Activated CD4-positive, alpha-beta T cell treated with anti-CD3 and anti-CD28 coated beads, Interleukin-2, amount 10 ng/mL, durations not matched to agents 24 days and 14 days (primary cell): ENCODE measurements at regions of chr6 and their contacts with region 1.

Region 1: DNA sequence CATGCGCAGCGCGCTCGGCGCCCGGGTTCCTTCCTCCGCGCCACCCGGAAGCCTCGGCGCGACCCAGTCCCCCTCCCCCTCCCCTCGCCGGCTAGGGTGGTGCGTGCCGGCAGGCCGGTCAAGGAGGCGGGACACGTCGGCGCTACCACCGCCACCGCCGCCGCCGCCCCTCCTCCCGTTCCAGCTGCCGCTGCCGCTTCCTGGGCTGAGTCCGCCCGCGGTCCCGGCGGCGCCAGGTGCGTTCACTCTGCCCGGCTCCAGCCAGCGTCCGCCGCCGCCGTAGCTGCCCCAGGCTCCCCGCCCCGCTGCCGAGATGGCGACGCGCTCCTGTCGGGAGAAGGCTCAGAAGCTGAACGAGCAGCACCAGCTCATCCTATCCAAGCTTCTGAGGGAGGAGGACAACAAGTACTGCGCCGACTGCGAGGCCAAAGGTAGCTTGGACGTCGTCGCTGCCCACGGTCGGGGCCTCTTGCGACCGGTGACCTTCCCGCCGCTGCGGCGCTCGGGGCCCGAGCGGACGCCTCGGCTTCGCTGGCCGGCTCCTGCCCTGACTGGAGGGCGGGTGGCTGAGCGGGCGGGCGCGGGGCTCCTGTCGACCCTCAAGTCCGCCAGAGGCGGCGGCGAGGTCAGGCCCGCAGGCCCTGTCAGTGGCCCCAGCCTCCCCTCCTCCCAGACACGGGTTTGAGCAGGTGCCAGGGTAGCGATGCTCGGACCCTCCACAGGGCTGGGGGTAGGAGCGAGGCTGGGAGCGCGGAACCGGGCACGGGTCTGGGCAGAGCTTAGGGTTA is at the start of gene SMAP1:
- DNase-seq: peak; percentile 98
- H3K4me3 Mint-ChIP-seq: peak within 1 kb of the TSS; percentile 90
- H3K27ac Mint-ChIP-seq: peak within 1 kb of the TSS; percentile 94
- H3K4me1 Mint-ChIP-seq: peaks cover 52% of the 10 kb centered on the region
- H3K27me3 Mint-ChIP-seq: no peaks in the 10 kb centered on the region
- total RNA-seq, gene SMAP1: 21.5 and 23.2 TPM in 2 replicates

Region 2: GRCh38 chr6:70413114-70413991 is 254.6 kb before region 1 on chr6 and contains the start of gene FAM135A:
- intact Hi-C with region 1: loop called (anchors 1 kb)
- DNase-seq: peak; percentile 98
- H3K4me3 Mint-ChIP-seq: peak within 1 kb of the TSS; percentile 92
- H3K27ac Mint-ChIP-seq: peak within 1 kb of the TSS; percentile 87
- H3K4me1 Mint-ChIP-seq: peaks cover 27% of the 10 kb centered on the region
- H3K27me3 Mint-ChIP-seq: peaks cover 7% of the 10 kb centered on the region
- total RNA-seq, gene FAM135A: 7.7 and 10.5 TPM in 2 replicates

Region 3: GRCh38 chr6:70557998-70558397 is 109.9 kb before region 1 on chr6:
- intact Hi-C with region 1: loop called (anchors 2 kb)
- DNase-seq: peak; percentile 14
- H3K4me3 Mint-ChIP-seq: no peak overlapping the region
- H3K27ac Mint-ChIP-seq: peak overlapping the region; percentile 64
- H3K4me1 Mint-ChIP-seq: peaks cover 16% of the 10 kb centered on the region
- H3K27me3 Mint-ChIP-seq: no peaks in the 10 kb centered on the region

Region 4: GRCh38 chr6:70566751-70567382 is 101.0 kb before region 1 on chr6 and contains the start of gene SDHAF4:
- intact Hi-C with region 1: loop called (anchors 1 kb)
- DNase-seq: no peak
- H3K4me3 Mint-ChIP-seq: peak within 1 kb of the TSS; percentile 88
- H3K27ac Mint-ChIP-seq: peak within 1 kb of the TSS; percentile 90
- H3K4me1 Mint-ChIP-seq: peaks cover 11% of the 10 kb centered on the region
- H3K27me3 Mint-ChIP-seq: no peaks in the 10 kb centered on the region
- total RNA-seq, gene SDHAF4: 9.5 and 14.3 TPM in 2 replicates

Region 5: GRCh38 chr6:70651326-70651905 is 16.5 kb before region 1 on chr6:
- intact Hi-C with region 1: loop called (anchors 1 kb)
- DNase-seq: peak; percentile 94
- H3K4me3 Mint-ChIP-seq: peak overlapping the region; percentile 71
- H3K27ac Mint-ChIP-seq: peak overlapping the region; percentile 84
- H3K4me1 Mint-ChIP-seq: peaks cover 45% of the 10 kb centered on the region
- H3K27me3 Mint-ChIP-seq: no peaks in the 10 kb centered on the region

Region 6: GRCh38 chr6:71139249-71139648 is 471.3 kb after region 1 on chr6:
- intact Hi-C with region 1: no loop called
- DNase-seq: no peak
- H3K4me3 Mint-ChIP-seq: no peak overlapping the region
- H3K27ac Mint-ChIP-seq: no peak overlapping the region
- H3K4me1 Mint-ChIP-seq: no peaks in the 10 kb centered on the region
- H3K27me3 Mint-ChIP-seq: no peaks in the 10 kb centered on the region

Region 7: DNA sequence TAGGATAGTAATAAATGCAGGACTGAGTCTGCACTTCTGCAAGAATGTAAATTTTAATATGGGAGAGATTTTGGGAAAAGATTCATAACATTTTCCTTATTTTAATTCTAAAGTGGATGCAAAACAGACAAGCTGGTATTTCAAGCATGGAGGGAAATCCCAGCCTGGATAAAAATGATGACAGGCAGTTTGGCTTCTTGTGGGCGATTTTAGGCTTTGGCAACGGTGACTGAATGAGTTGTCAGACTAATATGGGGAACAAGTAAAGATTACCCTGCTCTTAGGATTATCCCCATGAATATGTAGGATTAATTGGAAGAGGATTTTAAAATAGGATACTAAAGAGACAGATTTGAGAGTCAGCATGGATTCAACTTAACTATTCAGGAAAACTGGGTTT is 641.8 kb after region 1 on chr6:
- intact Hi-C with region 1: no loop called
- DNase-seq: no peak
- H3K4me3 Mint-ChIP-seq: no peak overlapping the region
- H3K27ac Mint-ChIP-seq: no peak overlapping the region
- H3K4me1 Mint-ChIP-seq: no peaks in the 10 kb centered on the region
- H3K27me3 Mint-ChIP-seq: peaks cover 7% of the 10 kb centered on the region

Region 8: DNA sequence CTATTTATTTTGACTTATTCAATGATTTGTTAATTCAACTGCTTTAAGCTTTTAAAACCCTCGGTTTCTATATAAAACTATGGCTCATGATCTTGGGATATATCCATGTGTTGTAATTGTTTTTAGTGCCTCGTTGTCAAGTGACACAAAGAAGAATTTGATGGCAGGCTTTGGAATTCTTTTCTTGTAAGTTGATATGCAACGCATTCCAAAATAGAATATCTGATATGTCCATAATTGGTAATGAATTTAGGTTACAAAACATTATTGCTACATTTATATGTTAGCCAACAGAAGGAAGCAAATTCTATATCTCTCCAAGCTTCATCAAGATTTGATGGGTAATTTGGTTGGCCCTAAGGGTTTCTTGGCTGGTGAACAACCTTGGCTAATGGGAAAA is 998.0 kb after region 1 on chr6:
- intact Hi-C with region 1: no loop called
- DNase-seq: no peak
- H3K4me3 Mint-ChIP-seq: no peak overlapping the region
- H3K27ac Mint-ChIP-seq: no peak overlapping the region
- H3K4me1 Mint-ChIP-seq: no peaks in the 10 kb centered on the region
- H3K27me3 Mint-ChIP-seq: no peaks in the 10 kb centered on the region